GM13977 (cell line): ENCODE measurements at regions of chr10 and their contacts with region 1.

Region 1: GRCh38 chr10:69392481-69393000 is 24.2 kb downstream of the TACR2 start:
- DNase-seq: peak; percentile 89
- CTCF ChIP-seq: peak; percentile 97

Region 2: DNA sequence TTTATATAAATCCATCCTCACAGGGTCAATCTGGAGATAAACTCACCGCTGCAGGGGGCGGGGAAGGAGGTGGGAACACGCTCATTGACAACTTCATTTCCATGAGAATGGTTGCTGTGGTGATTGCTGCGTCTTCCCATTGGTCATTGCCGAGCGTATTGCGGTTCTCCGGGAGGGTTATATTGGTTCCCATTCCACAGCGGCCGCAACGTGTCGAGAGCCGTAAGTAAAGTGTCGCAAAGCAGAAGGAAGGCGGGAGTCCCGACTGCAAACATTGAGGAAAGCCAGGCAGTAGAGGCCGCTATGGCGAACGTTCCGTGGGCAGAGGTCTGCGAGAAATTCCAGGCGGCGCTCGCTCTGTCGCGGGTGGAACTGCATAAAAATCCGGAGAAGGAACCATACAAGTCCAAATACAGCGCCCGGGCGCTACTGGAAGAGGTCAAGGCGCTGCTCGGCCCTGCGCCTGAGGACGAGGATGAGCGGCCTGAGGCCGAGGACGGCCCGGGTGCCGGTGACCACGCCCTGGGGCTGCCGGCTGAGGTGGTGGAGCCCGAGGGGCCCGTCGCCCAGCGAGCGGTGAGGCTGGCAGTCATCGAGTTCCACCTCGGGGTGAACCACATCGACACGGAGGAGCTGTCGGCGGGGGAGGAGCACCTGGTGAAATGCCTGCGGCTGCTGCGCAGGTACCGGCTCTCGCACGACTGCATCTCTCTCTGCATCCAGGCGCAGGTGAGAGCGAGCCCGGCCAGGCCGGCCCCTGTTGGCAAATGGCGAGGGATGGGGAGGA is 403.8 kb before region 1 on chr10 and contains the start of gene KIFBP:
- in situ Hi-C with region 1: loop called (anchors 25 kb)
- DNase-seq: peak; percentile 93
- CTCF ChIP-seq: peak; percentile 47

Region 3: GRCh38 chr10:69217119-69217754 is 175.3 kb before region 1 on chr10:
- in situ Hi-C with region 1: no loop called
- DNase-seq: no peak
- CTCF ChIP-seq: no peak

Region 4: DNA sequence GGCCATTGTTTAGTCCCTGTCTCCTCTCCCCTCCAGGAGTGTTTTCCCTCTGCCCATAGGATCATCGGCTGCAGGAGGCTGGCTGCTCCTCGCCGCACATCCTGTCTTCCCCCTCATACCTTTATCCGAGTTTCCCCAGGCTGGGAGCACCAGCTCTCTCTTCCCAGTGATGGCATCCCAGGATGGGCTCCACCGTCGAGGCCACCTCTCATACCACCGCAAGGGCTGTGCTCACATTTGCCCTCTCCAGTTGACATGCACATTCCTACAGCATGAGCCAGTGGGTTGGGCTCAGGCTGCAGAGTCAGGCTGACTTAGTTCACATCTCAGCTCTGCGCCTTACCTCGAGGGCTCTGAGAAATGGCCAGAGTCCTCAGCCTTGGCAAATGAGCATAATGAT is 160.3 kb before region 1 on chr10:
- in situ Hi-C with region 1: loop called (anchors 5 kb)
- DNase-seq: no peak
- CTCF ChIP-seq: no peak